H1 (cell line): ENCODE measurements at regions of chr1 and their contacts with region 1.

Region 1: DNA sequence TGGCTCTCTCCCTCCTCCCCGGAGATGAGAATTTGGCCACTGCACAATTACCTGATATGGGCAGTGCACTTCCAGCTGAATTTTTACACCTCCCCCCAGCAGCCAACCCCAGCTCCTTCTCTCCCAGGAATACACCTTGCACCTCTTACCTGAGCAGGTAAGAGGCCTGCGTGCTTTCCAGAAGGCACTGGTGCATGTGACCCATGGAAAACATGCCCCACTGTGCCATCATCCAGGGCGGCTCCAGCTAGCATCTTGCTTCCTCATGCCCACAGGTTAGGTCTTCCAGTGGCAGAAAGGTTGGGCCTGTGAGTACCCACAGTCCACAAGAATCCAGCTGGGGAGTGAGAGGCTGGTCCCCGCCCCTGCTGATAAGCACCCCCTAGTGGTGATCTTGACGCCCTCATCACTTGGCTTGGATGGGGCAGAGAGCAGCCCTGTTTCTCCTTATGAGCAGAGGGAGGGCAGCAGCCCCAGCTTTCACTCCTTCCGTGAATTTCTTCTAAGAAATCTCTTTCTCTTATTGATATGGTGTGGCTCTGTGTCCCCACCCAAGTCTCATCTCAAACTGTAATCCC is 57.8 kb downstream of the EDARADD start:
- DNase-seq: peak; percentile 15 to 77
- H3K4me3 ChIP-seq: no peak overlapping the region
- H3K27ac ChIP-seq: no peak overlapping the region
- H3K4me1 ChIP-seq: no peaks in the 10 kb centered on the region
- H3K27me3 ChIP-seq: peaks cover 0 to 1% (median 0%) of the 10 kb centered on the region in 4 experiments; a peak in 1 of 7 replicates
- CTCF ChIP-seq: peak; percentile 71 to 85 (median 83)
- EP300 ChIP-seq: no peak
- POLR2A ChIP-seq: no peak
- RAD21 ChIP-seq: peak; percentile 58 to 76; a peak in 3 of 4 replicates

Region 2: DNA sequence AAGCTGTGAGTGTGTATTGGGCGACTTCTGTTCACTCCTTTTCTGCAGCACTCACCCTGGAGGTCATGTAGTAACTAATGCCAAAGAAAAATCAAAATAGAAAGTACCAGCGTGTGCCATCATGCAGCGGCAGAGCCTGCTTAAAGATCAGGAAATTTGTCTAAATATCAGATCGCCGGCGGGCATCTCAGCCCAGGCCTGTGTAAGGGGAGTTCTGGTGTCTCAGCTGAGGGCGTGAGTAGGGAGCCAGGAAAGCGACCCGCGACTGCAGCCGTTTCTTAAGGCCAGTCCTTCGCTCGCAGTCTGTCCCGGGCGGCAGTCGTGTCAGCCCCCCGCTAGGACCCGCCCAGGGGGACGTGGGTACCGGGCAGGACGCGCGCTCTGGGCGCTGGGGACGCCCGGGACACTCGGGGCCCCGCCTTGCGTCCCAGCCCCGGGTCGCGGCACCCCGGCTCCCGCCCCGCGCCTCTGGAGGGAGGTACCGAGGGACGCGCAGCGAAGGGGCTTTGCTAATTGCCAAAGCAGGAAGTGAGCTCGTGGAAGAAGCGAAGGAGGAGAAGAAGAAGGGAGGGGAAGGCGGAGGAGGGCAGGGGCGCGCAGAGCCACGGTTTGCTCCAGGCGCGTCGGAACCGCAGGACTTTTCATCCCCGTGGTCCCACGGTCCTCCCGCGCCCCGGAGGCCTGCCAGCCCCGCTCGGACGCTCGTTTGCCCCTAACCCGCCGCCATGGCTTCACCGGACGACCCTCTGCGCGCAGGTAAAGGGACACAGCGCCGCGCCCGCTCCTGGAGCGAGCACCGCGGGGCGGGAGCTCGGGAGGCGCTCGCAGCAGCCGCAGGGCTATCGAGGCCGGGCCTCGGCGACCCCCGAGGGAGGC is 56.7 kb before region 1 on chr1:
- CTCF ChIA-PET with region 1: interaction called, 10 read pairs
- POLR2A ChIA-PET with region 1: no interaction called
- DNase-seq: peak in 1 of 2 experiments; percentile 80
- H3K4me3 ChIP-seq: peak overlapping the region; percentile 85 to 89 (median 88)
- H3K27ac ChIP-seq: no peak overlapping the region
- H3K4me1 ChIP-seq: peaks cover 0 to 12% (median 7%) of the 10 kb centered on the region in 4 experiments; a peak in 6 of 7 replicates
- H3K27me3 ChIP-seq: peaks cover 1 to 12% (median 9%) of the 10 kb centered on the region in 4 experiments; a peak in 6 of 7 replicates
- CTCF ChIP-seq: no peak
- EP300 ChIP-seq: no peak
- POLR2A ChIP-seq: no peak
- RAD21 ChIP-seq: no peak

Region 3: DNA sequence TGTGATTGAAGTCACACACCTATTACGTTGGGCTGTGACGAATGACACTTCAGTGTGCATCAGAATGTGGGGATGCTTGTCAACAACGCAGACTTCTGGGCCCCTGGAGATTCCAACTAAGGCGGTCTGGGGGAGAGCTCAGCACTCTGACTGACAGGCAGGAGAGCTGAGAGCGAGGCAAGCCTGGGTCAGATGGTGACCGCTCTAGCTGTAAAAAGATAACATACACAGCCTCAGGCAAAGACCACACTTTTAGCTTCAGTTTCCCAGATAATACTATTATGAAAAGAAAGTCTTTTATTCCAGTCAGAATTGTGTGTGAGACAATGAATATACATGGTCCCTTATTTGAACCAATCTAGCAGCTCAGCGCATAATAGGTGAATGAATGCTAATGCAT is 32.4 kb before region 1 on chr1:
- CTCF ChIA-PET with region 1: interaction called, 11 read pairs
- POLR2A ChIA-PET with region 1: no interaction called
- DNase-seq: no peak
- H3K4me3 ChIP-seq: no peak overlapping the region
- H3K27ac ChIP-seq: no peak overlapping the region
- H3K4me1 ChIP-seq: no peaks in the 10 kb centered on the region; a peak in 1 of 7 replicates
- H3K27me3 ChIP-seq: no peaks in the 10 kb centered on the region
- CTCF ChIP-seq: no peak
- EP300 ChIP-seq: no peak
- POLR2A ChIP-seq: no peak
- RAD21 ChIP-seq: no peak

Region 4: GRCh38 chr1:236438614-236439013 is 13.3 kb before region 1 on chr1:
- CTCF ChIA-PET with region 1: interaction called, 34 read pairs
- POLR2A ChIA-PET with region 1: no interaction called
- DNase-seq: no peak
- H3K4me3 ChIP-seq: no peak overlapping the region
- H3K27ac ChIP-seq: no peak overlapping the region
- H3K4me1 ChIP-seq: no peaks in the 10 kb centered on the region
- H3K27me3 ChIP-seq: no peaks in the 10 kb centered on the region
- CTCF ChIP-seq: no peak
- EP300 ChIP-seq: no peak
- POLR2A ChIP-seq: no peak
- RAD21 ChIP-seq: no peak

Region 5: GRCh38 chr1:236465959-236466303 is 14.0 kb after region 1 on chr1:
- CTCF ChIA-PET with region 1: interaction called, 20 read pairs
- POLR2A ChIA-PET with region 1: no interaction called
- DNase-seq: no peak
- H3K4me3 ChIP-seq: no peak overlapping the region
- H3K27ac ChIP-seq: no peak overlapping the region
- H3K4me1 ChIP-seq: peaks cover 0 to 6% (median 1%) of the 10 kb centered on the region in 4 experiments; a peak in 3 of 7 replicates
- H3K27me3 ChIP-seq: no peaks in the 10 kb centered on the region
- CTCF ChIP-seq: no peak
- EP300 ChIP-seq: no peak
- POLR2A ChIP-seq: no peak
- RAD21 ChIP-seq: no peak

Region 6: DNA sequence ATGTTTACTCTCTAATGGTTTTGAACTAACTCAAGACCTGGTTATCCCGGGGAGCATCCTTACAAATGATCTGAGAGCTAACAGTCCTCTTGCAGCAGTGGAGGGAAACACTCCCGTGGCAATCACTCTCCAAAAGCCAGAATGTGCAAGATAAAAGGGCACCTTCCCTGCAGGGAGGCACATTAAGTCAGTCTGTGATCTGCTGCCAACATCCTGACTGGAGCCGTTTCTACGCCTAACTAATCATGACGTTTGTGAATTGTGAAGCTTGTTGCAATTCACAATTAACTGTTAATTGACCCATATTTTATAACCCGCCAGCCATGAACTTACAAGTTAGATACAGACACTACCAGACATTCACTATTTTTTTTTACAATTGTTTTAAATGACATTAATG is 19.8 kb after region 1 on chr1:
- CTCF ChIA-PET with region 1: interaction called, 20 read pairs
- POLR2A ChIA-PET with region 1: no interaction called
- DNase-seq: no peak
- H3K4me3 ChIP-seq: no peak overlapping the region
- H3K27ac ChIP-seq: no peak overlapping the region
- H3K4me1 ChIP-seq: peaks cover 0 to 10% (median 5%) of the 10 kb centered on the region in 4 experiments; a peak in 3 of 7 replicates
- H3K27me3 ChIP-seq: no peaks in the 10 kb centered on the region
- CTCF ChIP-seq: no peak
- EP300 ChIP-seq: no peak
- POLR2A ChIP-seq: no peak
- RAD21 ChIP-seq: no peak

Region 7: GRCh38 chr1:236489710-236490377 is 38.0 kb after region 1 on chr1:
- CTCF ChIA-PET with region 1: interaction called, 11 read pairs
- POLR2A ChIA-PET with region 1: no interaction called
- DNase-seq: no peak
- H3K4me3 ChIP-seq: no peak overlapping the region
- H3K27ac ChIP-seq: no peak overlapping the region
- H3K4me1 ChIP-seq: peaks cover 2 to 8% (median 6%) of the 10 kb centered on the region in 4 experiments; a peak in 5 of 7 replicates
- H3K27me3 ChIP-seq: no peaks in the 10 kb centered on the region
- CTCF ChIP-seq: peak in 2 of 3 experiments; percentile 34 to 47; a peak in 2 of 4 replicates
- EP300 ChIP-seq: no peak
- POLR2A ChIP-seq: no peak
- RAD21 ChIP-seq: peak; percentile 57 to 67